ENCODE measurements at regions of chr1 and their contacts with region 1.

Region 1: DNA sequence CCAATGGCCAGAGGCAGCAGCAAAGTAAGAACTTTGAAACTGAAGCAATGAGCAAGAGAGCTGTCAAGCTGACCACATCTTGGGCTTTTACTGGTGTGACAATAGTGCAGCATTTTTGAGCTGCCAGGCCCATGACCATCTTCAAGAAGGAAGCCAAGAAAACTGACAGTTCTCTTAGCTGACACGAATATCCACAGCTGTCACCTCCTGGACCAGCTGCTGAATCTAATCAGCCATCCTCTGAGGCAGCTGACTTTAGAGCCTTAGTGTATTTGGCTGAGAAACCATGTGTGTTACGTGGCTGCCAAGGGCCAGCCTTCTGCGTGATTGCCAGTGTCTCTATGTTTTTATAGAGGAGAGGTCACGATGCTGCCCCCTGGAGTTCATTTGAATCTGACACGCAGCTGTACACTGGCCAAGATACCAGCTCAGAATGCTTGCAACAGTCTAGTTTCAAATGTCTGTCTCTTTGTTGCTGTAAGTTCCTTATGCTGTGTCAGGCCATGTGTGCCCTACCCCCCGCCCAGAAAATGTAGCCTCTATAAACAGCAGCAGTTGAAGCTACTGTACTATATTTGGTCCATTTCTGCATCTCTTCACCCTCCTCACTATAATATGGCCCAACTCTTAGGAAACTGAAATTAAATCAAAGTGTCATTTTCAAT is 39.7 kb downstream of the PALMD start:
- DNase-seq: peak; percentile 63
- H3K4me3 ChIP-seq: no peak overlapping the region
- CTCF ChIP-seq: peak; percentile 57

Region 2: DNA sequence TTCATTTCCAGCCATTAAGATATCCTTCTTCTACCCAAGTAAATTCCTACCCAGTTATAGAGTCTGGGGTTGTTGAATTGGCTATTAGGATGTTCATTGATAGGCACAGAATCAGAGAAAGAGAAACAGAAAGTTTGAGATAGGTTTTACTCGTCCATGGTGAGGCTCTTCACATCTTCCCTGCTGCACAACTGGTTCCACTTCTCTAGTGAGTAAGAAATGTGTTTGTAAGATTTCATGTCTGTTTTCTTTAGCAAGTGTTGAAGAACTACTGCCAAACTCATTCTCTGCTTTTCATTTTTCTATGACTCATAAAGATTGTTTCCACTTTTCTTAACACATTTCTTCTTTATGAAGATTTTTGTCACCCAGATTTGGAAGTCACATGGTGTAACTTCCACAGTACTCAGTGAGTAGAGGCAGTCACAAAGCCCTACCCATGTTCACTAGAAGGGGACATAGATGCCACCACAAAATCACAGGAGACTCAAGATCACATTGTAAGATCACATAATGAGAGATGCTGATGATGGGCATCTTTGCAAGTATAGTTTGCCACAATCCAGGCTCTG is 871.8 kb before region 1 on chr1:
- in situ Hi-C with region 1: loop called (anchors 25 kb)
- DNase-seq: no peak
- H3K4me3 ChIP-seq: no peak overlapping the region
- CTCF ChIP-seq: no peak

Region 3: DNA sequence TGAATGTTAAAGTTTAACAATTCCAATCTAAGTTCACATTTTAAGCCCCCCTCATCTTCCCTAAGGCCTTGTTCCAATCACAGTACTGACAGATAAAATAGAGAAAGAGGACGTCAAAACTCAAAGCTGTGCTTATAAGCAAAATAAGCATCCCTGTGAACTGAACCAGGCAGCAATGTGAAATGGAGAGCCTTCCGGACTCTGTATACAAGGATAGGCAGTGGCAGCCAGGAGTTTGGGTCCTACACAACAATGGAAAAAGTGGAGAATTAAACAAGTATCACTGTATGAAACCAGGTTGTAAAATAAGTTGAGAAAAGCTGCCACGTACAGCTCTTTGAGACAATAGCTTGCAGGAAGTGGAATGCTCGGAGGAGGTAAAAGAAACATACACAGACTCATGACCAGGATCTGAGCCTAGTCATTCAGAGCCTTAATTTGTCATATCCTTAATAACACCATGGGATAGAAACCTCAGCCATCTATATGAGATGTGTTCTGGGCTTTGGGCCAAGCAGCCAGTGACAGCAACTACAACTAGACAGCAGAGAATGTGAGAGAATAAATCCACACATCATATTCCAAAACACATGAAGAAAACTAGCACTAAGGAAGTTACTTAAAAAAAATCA is 95.0 kb before region 1 on chr1:
- in situ Hi-C with region 1: no loop called
- DNase-seq: peak; percentile 93
- H3K4me3 ChIP-seq: no peak overlapping the region
- CTCF ChIP-seq: no peak